HepG2 (cell line): ENCODE measurements at regions of chr21 and their contacts with region 1.

Region 1: GRCh38 chr21:33199516-33200217 is 30.1 kb upstream of the IFNAR2 start:
- DNase-seq: peak; percentile 88
- ATAC-seq: peak; percentile 76
- H3K4me3 ChIP-seq: no peak overlapping the region
- H3K27ac ChIP-seq: no peak overlapping the region
- H3K4me1 ChIP-seq: peaks cover 31% of the 10 kb centered on the region
- H3K27me3 ChIP-seq: peaks cover 0 to 20% of the 10 kb centered on the region in 2 experiments; a peak in 2 of 5 replicates
- CTCF ChIP-seq: peak; percentile 89
- EP300 ChIP-seq: no peak
- POLR2A ChIP-seq: no peak
- RAD21 ChIP-seq: peak; percentile 86

Region 2: GRCh38 chr21:32834916-32835235 is 364.8 kb before region 1 on chr21:
- CTCF ChIA-PET with region 1: no interaction called
- POLR2A ChIA-PET with region 1: no interaction called
- in situ Hi-C with region 1: loop called (anchors 10 kb)
- intact Hi-C with region 1: loop called (anchors 2 kb)
- DNase-seq: no peak
- ATAC-seq: no peak
- H3K4me3 ChIP-seq: no peak overlapping the region
- H3K27ac ChIP-seq: no peak overlapping the region
- H3K4me1 ChIP-seq: 0 out of 2 replicates have a peak, but pooled peaks cover 7% of the 10 kb centered on the region
- H3K27me3 ChIP-seq: peaks cover 0 to 5% of the 10 kb centered on the region in 2 experiments; a peak in 1 of 5 replicates
- CTCF ChIP-seq: no peak
- EP300 ChIP-seq: no peak
- POLR2A ChIP-seq: no peak
- RAD21 ChIP-seq: no peak

Region 3: DNA sequence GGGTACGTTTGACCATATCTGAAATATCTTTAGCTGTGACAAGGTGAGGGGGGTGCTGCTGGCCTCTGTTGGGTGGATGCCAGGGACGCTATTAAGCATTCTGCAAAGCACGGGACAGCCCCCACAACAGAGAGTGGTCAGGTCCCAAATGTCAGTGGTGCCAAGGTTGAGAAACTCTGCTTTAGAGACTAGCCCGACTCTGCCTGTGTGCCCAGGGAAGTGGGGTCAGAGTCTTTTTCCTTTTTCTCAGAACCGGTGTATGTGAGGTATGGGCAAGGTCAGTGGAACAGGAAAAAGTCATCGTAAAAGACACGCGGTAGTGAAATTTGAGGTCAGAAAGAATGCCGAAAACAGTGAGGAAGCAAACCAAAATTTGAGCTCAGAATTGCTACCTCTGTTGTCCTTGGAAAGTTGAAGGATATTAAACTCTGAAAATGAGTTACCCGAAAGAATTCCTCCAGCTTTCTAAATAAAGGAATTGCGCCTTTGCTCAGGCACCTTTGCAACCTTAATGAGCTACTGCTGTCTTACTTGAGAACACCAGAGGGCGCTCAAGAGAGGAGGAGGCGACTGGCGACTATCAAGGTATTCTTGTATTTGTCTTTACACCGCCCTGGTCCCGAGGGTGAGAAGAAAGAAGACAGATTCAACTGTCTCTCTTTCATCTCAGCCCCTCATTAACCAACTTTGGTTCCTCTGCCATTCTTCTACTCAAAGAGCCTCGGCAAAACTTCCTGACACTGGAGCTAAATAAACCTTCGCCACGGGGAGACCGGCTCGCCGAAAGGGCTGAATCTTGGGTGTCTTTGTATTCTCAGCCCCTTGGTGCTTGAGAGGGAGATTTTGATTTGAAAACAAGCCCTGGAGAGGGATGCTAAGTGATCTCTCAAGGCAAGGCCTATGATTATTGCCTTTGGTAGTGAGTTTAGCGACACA is 259.3 kb before region 1 on chr21:
- CTCF ChIA-PET with region 1: interaction called, 11 read pairs
- POLR2A ChIA-PET with region 1: no interaction called
- in situ Hi-C with region 1: no loop called
- intact Hi-C with region 1: no loop called
- DNase-seq: peak; percentile 39
- ATAC-seq: peak; percentile 48; the same call in 1 of the 3 replicates
- H3K4me3 ChIP-seq: no peak overlapping the region
- H3K27ac ChIP-seq: no peak overlapping the region
- H3K4me1 ChIP-seq: no peaks in the 10 kb centered on the region
- H3K27me3 ChIP-seq: peaks cover 1 to 22% of the 10 kb centered on the region in 2 experiments
- CTCF ChIP-seq: peak; percentile 68
- EP300 ChIP-seq: no peak
- POLR2A ChIP-seq: no peak
- RAD21 ChIP-seq: no peak

Region 4: GRCh38 chr21:33127154-33127893 is 72.3 kb before region 1 on chr21:
- CTCF ChIA-PET with region 1: no interaction called
- POLR2A ChIA-PET with region 1: no interaction called
- in situ Hi-C with region 1: no loop called
- intact Hi-C with region 1: loop called (anchors 2 kb)
- DNase-seq: peak; percentile 56
- ATAC-seq: peak; percentile 86
- H3K4me3 ChIP-seq: peak overlapping the region in 2 of 3 experiments; percentile 37 to 55; a peak in 4 of 6 replicates
- H3K27ac ChIP-seq: no peak overlapping the region
- H3K4me1 ChIP-seq: peaks cover 21% of the 10 kb centered on the region
- H3K27me3 ChIP-seq: peaks cover 4 to 23% of the 10 kb centered on the region in 2 experiments; a peak in 3 of 5 replicates
- CTCF ChIP-seq: peak; percentile 78
- EP300 ChIP-seq: no peak
- POLR2A ChIP-seq: no peak
- RAD21 ChIP-seq: peak; percentile 67

Region 5: GRCh38 chr21:33324291-33325221 is 124.9 kb after region 1 on chr21 and contains the start of gene IFNAR1:
- CTCF ChIA-PET with region 1: no interaction called
- POLR2A ChIA-PET with region 1: interaction called, 6 read pairs
- in situ Hi-C with region 1: no loop called
- intact Hi-C with region 1: loop called (anchors 2 kb)
- DNase-seq: peak; percentile 92
- ATAC-seq: peak; percentile 90
- H3K4me3 ChIP-seq: peak within 1 kb of the TSS; percentile 60 to 89 (median 86)
- H3K27ac ChIP-seq: peak within 1 kb of the TSS; percentile 89
- H3K4me1 ChIP-seq: peaks cover 27% of the 10 kb centered on the region
- H3K27me3 ChIP-seq: no peaks in the 10 kb centered on the region
- CTCF ChIP-seq: peak; percentile 39
- EP300 ChIP-seq: no peak
- POLR2A ChIP-seq: peak; percentile 70 to 87
- RAD21 ChIP-seq: no peak
- total RNA-seq, gene IFNAR1: 9.3 and 11.2 TPM in 2 replicates

Region 6: DNA sequence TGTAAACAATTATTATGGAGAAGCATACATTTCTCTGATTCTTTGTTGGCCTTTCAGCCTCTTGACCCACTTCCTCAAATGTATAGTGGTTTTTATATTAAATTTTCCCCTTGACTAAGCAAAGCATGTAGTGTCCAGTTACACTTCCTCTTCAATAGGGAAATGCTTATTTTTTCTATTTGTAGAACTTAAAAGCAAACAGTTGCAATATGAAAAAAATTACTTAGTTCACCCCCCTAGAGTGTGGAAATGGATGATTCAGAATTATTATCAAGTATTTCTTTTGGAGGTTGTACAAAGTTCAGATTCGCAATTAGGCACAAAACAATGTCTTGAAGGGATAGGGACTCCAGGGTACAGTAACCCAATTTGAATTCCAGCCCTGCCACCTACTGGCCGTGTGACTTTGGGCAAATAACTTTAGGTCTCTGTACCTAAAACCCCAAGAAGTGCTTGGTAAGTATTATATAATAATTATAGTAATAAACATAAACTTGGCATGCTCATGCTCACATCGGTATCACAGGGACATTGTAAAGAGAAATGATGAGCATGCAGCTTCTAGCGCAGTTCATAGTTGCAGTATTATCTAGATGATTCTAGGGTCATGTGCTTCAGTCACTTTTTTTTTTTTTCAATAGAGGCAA is 174.9 kb after region 1 on chr21:
- CTCF ChIA-PET with region 1: interaction called, 10 read pairs
- POLR2A ChIA-PET with region 1: no interaction called
- in situ Hi-C with region 1: no loop called
- intact Hi-C with region 1: loop called (anchors 1 kb)
- DNase-seq: peak; percentile 39
- ATAC-seq: peak; percentile 80
- H3K4me3 ChIP-seq: no peak overlapping the region
- H3K27ac ChIP-seq: no peak overlapping the region
- H3K4me1 ChIP-seq: peaks cover 14% of the 10 kb centered on the region
- H3K27me3 ChIP-seq: no peaks in the 10 kb centered on the region
- CTCF ChIP-seq: peak; percentile 71
- EP300 ChIP-seq: no peak
- POLR2A ChIP-seq: no peak
- RAD21 ChIP-seq: no peak

Region 7: DNA sequence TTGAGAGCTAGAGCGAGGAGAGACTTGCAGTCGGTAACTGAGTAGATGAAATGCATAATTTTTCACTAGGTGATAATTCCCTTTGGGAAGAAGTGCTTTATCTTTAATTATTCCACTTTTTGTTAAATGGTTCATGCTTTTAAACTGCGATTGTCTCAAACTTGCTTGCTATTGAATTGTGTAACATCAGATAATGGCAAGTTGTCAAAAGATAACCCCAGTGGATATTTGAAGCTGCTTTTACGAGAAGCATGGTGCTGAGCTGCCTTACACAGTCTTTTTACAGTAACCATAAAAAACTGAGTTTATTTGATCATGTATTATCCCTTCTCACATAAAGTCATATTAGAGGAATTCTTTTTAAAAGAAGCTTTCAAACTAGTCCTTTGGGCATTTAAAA is 249.9 kb after region 1 on chr21:
- CTCF ChIA-PET with region 1: interaction called, 12 read pairs
- POLR2A ChIA-PET with region 1: no interaction called
- in situ Hi-C with region 1: loop called (anchors 5 kb)
- intact Hi-C with region 1: loop called (anchors 1 kb)
- DNase-seq: no peak
- ATAC-seq: no peak
- H3K4me3 ChIP-seq: no peak overlapping the region
- H3K27ac ChIP-seq: no peak overlapping the region
- H3K4me1 ChIP-seq: peaks cover 14% of the 10 kb centered on the region
- H3K27me3 ChIP-seq: no peaks in the 10 kb centered on the region
- CTCF ChIP-seq: no peak
- EP300 ChIP-seq: no peak
- POLR2A ChIP-seq: no peak
- RAD21 ChIP-seq: no peak